Aorta (tissue), 5 donors: ENCODE measurements at regions of chr2 and their contacts with region 1.

Region 1: DNA sequence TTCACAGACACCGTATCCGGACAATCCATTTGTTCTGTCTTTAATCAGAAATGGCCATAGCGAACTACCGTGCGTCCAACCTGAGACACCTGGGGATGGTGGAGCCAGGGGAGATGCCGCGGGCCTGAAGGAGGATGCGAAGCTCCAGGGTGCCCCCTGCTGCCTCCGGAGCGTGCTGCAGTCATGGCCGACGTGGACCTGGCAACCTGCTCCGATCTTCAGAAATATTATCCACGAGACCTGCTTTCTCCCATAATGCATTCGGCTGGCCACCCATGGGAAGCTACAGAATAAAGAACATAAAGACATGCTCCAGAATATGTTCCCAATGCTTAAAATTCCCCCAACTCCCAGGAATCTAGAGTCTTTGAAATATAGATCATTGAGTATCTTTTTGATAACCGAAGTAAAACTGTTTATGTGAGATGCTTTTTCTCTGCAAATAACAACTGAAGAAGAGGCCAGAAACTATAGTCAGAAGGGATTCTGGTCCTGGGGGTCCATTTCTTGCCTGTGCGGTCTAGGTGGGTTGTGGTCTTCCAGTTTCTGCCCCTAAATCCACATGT is 30.7 kb upstream of the SLC66A3 start:
- DNase-seq: peak in 1 of 2 donors; percentile 66
- ATAC-seq: no peak
- H3K4me3 ChIP-seq: no peak overlapping the region
- H3K27ac ChIP-seq: no peak overlapping the region
- H3K4me1 ChIP-seq: no peaks in the 10 kb centered on the region
- H3K27me3 ChIP-seq: no peaks in the 10 kb centered on the region

Region 2: DNA sequence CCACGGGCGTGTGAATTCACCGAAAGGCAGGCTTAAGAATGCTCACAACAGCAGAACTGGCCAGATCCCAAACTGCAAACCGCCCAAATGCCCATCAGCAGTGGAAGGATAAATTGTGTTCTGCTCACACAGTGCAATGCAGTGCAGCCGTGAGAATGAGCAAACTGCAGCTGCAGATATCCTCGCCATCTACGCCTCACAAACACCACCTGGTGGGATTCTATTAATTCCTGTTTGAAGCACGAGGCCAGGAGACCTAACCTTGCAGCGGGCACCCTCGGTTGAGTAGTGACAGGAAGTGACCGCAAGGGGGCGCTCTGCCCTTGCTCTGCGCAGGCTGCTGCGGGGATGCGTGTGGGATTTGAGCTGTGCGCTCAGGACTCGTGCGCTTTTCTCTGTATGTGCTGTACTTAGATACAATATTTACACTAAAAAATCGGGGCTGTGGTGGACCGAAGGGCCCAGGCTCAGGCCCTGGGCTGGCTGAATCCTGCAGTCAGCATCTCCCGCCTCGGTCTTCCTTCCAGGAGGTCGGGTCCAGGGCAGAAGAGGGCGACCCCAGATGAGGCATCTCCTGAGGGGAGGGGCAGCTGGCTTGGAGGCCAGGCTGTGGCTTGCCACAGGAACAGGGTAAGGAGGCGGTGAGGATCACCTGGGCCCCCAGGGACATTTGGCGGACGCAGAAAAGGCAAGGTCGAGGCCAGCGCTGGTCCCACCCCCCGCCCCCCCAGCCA is 292.2 kb before region 1 on chr2:
- intact Hi-C with region 1: loop called in 1 of 2 experiments (anchors 5 kb)
- DNase-seq: peak; percentile 85 to 94
- ATAC-seq: peak; percentile 84
- H3K4me3 ChIP-seq: no peak overlapping the region
- H3K27ac ChIP-seq: no peak overlapping the region
- H3K4me1 ChIP-seq: no peaks in the 10 kb centered on the region
- H3K27me3 ChIP-seq: no peaks in the 10 kb centered on the region